Left ventricle myocardium superior (tissue), 1 donor: ENCODE measurements at regions of chr14 and their contacts with region 1.

Region 1: DNA sequence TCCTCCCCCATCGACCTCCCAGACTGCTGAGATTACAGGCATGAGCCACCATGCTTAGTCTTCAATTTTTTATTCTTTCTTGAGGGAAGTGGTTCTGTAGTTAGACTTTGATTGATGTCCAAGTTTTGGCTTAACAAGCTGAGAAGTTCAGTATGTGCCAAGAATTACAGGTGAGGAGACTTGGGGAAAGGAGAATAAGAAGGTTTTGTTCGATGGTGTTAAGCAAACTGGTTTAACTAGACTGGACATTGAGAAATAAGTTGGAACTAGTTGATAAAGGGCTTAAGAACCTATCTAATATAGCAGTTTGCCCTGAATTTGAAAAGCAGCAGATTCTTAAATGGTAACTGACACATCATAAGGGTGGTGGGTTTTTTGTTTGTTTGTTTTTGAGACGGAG is 32.6 kb upstream of the PLEKHD1 start:
- DNase-seq: no peak
- ATAC-seq: no peak

Region 2: GRCh38 chr14:69242311-69243224 is 209.4 kb before region 1 on chr14:
- intact Hi-C with region 1: loop called (anchors 5 kb)
- DNase-seq: no peak
- ATAC-seq: peak; percentile 69

Region 3: DNA sequence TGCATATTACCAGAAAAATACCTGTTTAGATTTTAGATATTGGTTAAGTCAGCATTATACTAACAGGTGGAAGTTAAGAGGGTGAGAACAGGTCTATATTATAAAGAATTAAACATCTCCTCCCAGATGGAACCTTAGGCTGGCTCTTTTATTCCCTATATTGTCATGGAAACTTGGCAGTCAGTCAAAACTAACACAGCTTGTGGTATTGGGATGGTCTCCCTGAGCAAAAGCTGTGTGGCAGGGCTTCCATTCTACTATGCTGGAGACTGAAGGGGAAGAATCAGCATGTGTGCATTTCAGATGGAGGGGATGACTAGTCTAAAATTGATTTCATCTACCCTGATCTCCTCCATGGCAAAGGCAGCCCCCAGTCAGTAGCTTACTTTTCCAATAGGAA is 494.0 kb after region 1 on chr14:
- intact Hi-C with region 1: no loop called
- DNase-seq: no peak
- ATAC-seq: no peak